ENCODE measurements at regions of chr10 and their contacts with region 1.

Region 1: DNA sequence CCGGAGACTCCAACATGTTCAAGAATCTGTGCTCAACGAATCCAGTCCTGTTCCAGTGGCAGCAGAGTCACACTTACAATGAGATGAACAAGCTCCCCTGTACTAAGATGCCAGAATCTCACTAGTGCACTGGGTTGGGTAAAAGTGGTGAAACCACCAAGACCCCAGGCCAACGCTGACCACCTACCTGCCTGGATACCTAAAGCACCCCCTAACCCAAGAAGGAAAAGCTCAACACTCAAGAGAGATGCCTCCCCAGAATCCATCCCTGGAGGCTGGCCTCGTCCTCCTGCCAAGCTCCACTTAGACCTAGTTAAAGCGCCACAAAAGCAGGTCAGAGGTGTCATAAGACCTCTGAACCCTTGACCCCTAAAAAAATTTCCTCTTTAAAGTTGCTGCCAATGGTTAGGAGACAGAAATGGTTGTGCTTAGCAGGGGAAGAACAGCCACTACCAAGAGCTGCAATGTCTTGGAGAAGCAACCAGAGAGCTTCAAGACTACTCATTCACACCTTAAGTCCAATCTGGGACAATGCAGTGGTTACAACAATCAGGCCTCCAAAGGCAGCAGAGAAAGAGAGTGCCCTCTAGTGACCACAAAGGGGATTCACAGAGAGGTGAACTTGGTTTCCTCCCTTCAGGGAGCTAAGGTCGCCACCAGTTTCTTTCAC is 94.6 kb upstream of the MACROH2A2 start:
- DNase-seq: peak; percentile 52
- H3K4me3 ChIP-seq: no peak overlapping the region
- H3K27ac ChIP-seq: no peak overlapping the region
- H3K4me1 ChIP-seq: peaks cover 22% of the 10 kb centered on the region
- H3K27me3 ChIP-seq: no peaks in the 10 kb centered on the region
- CTCF ChIP-seq: peak; percentile 87 to 98

Region 2: GRCh38 chr10:69515699-69516259 is 442.2 kb before region 1 on chr10:
- CTCF ChIA-PET with region 1: no interaction called
- dilution Hi-C with region 1: no loop called
- in situ Hi-C with region 1: no loop called
- intact Hi-C with region 1: loop called (anchors 5 kb)
- DNase-seq: peak; percentile 53
- H3K4me3 ChIP-seq: no peak overlapping the region
- H3K27ac ChIP-seq: no peak overlapping the region
- H3K4me1 ChIP-seq: no peaks in the 10 kb centered on the region
- H3K27me3 ChIP-seq: peaks cover 2% of the 10 kb centered on the region
- CTCF ChIP-seq: peak; percentile 94 to 96

Region 3: DNA sequence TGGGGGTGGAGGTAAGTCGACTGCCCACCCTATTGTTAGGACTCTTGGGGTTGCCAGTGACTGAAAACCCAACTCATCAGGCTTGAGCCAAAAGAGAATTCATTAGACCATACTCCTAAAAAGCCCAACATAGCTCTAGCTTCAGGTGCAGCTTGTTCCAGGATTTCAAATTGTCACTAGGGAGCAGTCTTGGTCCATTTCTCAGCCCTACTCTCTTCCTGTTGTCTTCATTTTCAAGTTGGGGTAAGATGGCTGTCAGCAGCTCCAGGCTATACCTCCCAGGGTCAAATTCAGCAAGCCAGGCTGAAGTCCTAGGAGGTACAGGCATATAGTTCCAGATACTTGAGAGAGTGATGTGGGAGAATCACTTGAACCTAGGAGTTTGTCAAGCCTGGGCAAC is 171.2 kb before region 1 on chr10:
- CTCF ChIA-PET with region 1: interaction called, 9 read pairs
- dilution Hi-C with region 1: no loop called
- in situ Hi-C with region 1: no loop called
- intact Hi-C with region 1: loop called (anchors 1 kb)
- DNase-seq: peak; percentile 35
- H3K4me3 ChIP-seq: no peak overlapping the region
- H3K27ac ChIP-seq: no peak overlapping the region
- H3K4me1 ChIP-seq: no peaks in the 10 kb centered on the region
- H3K27me3 ChIP-seq: no peaks in the 10 kb centered on the region
- CTCF ChIP-seq: peak; percentile 35 to 47

Region 4: GRCh38 chr10:69883310-69884023 is 74.6 kb before region 1 on chr10:
- CTCF ChIA-PET with region 1: interaction called, 3 read pairs
- dilution Hi-C with region 1: no loop called
- in situ Hi-C with region 1: no loop called
- intact Hi-C with region 1: loop called (anchors 1 kb)
- DNase-seq: peak; percentile 27
- H3K4me3 ChIP-seq: no peak overlapping the region
- H3K27ac ChIP-seq: no peak overlapping the region
- H3K4me1 ChIP-seq: no peaks in the 10 kb centered on the region
- H3K27me3 ChIP-seq: no peaks in the 10 kb centered on the region
- CTCF ChIP-seq: peak; percentile 50 to 74

Region 5: GRCh38 chr10:69936091-69936490 is 21.9 kb before region 1 on chr10:
- CTCF ChIA-PET with region 1: no interaction called
- dilution Hi-C with region 1: no loop called
- in situ Hi-C with region 1: no loop called
- intact Hi-C with region 1: loop called (anchors 1 kb)
- DNase-seq: no peak
- H3K4me3 ChIP-seq: no peak overlapping the region
- H3K27ac ChIP-seq: no peak overlapping the region
- H3K4me1 ChIP-seq: no peaks in the 10 kb centered on the region
- H3K27me3 ChIP-seq: no peaks in the 10 kb centered on the region
- CTCF ChIP-seq: peak in 1 of 2 donors; percentile 55

Region 6: GRCh38 chr10:70052462-70053217 is 94.6 kb after region 1 on chr10 and contains the start of gene MACROH2A2:
- CTCF ChIA-PET with region 1: interaction called, 3 read pairs
- dilution Hi-C with region 1: loop called (anchors 5 kb)
- in situ Hi-C with region 1: no loop called
- intact Hi-C with region 1: no loop called
- DNase-seq: peak; percentile 72
- H3K4me3 ChIP-seq: peak within 1 kb of the TSS; percentile 70 to 96 (median 81)
- H3K27ac ChIP-seq: peak within 1 kb of the TSS; percentile 61
- H3K4me1 ChIP-seq: no peaks in the 10 kb centered on the region
- H3K27me3 ChIP-seq: no peaks in the 10 kb centered on the region
- CTCF ChIP-seq: peak; percentile 19 to 57
- total RNA-seq, gene MACROH2A2: 17.8 to 32.6 TPM